Body of pancreas (tissue), 4 donors: ENCODE measurements at regions of chr16 and their contacts with region 1.

Region 1: GRCh38 chr16:66406534-66407221 is 20.4 kb upstream of the BEAN1 start:
- DNase-seq: peak; percentile 82 to 87 (median 84)
- ATAC-seq: peak; percentile 88
- H3K4me3 ChIP-seq: no peak overlapping the region
- H3K27ac ChIP-seq: no peak overlapping the region
- H3K4me1 ChIP-seq: peaks cover 7% of the 10 kb centered on the region
- H3K27me3 ChIP-seq: no peaks in the 10 kb centered on the region
- CTCF ChIP-seq: peak; percentile 72 to 90 (median 87)
- POLR2A ChIP-seq: peak in 1 of 3 donors; percentile 7

Region 2: DNA sequence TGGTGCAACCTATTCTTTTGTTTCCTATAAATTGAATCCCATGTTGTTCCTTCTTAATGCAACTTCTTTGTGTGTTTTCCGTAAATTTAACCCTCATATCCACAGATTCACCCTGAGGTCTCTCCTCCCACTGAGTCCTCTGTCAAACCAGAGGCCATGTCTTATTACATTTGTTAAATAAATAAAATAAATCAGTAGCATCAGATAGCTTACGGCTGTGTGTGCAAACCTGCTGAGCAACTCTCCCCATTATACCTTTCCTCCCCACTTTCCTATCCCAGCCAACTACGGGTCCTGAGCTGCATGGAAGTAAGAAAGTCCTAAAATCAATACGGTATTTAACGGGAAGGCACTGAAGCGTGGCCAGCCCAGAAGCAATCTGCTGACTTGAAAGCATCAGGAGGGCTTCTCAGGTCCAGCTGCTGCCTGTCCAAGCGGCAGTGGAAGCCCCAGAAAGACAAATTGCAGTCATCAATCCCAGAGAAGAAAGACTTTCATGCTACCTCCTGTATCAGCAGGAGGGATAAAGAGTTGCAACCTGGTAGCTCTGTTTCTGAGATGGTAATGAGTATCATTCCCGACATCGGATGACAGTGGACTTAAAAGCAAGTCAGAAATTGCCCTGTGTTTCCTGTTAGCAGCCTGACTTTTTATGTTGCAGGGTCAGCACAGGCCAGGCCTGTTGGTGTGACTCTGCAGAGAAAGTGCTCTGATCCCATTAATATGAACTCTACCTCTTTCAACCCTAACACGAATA is 926.5 kb before region 1 on chr16:
- intact Hi-C with region 1: no loop called
- DNase-seq: no peak
- ATAC-seq: no peak
- H3K4me3 ChIP-seq: no peak overlapping the region
- H3K27ac ChIP-seq: no peak overlapping the region
- H3K4me1 ChIP-seq: no peaks in the 10 kb centered on the region
- H3K27me3 ChIP-seq: no peaks in the 10 kb centered on the region
- CTCF ChIP-seq: no peak
- POLR2A ChIP-seq: no peak

Region 3: DNA sequence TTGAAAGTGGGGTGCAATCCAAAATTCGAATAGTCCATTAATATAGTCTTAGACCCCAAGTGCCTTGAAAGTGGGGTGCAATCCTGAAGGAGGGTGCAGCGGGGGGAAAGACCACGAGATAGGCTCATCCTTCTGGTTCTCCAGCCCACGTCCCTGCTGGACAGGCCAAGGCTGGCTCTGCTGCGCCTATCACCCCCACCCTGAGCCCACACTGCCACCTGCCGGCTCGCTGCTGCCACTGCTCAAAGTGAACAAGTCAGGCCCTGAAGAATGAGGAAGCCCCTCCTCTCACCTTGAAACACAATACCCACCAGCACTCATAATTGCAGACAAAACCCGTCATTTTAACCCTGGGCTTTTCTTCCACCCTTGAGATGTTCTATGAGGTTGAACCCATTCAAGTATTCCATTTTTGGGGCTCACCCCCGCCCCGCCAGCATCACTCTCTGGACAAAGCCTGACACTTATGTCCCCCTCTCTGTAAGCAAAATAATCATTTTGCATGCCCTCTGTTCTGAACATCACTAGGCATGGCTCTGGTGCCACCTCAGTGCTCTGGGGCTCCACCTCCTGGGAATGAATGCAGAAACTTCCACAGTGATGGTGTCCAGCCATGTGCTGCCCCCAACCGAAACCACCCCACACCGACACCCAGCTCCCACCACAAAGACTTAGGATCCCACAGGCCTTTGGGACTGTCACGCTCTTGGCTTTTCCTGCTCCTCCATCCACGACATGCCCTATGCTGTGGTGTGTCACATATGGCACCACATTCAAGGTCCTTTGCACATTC is 77.2 kb after region 1 on chr16:
- intact Hi-C with region 1: loop called (anchors 10 kb)
- DNase-seq: peak; percentile 73 to 77 (median 74)
- ATAC-seq: peak; percentile 78
- H3K4me3 ChIP-seq: no peak overlapping the region
- H3K27ac ChIP-seq: no peak overlapping the region
- H3K4me1 ChIP-seq: peaks cover 11% of the 10 kb centered on the region
- H3K27me3 ChIP-seq: no peaks in the 10 kb centered on the region
- CTCF ChIP-seq: peak; percentile 83 to 94 (median 87)
- POLR2A ChIP-seq: no peak

Region 4: GRCh38 chr16:66608241-66609138 is 201.8 kb after region 1 on chr16:
- intact Hi-C with region 1: loop called (anchors 10 kb)
- DNase-seq: peak; percentile 90 to 95 (median 92)
- ATAC-seq: peak; percentile 81
- H3K4me3 ChIP-seq: no peak overlapping the region
- H3K27ac ChIP-seq: peak overlapping the region in 2 of 4 donors; percentile 9 to 15
- H3K4me1 ChIP-seq: peaks cover 33% of the 10 kb centered on the region
- H3K27me3 ChIP-seq: peaks cover 0 to 4% of the 10 kb centered on the region in 2 donors
- CTCF ChIP-seq: peak; percentile 85 to 95 (median 90)
- POLR2A ChIP-seq: no peak

Region 5: DNA sequence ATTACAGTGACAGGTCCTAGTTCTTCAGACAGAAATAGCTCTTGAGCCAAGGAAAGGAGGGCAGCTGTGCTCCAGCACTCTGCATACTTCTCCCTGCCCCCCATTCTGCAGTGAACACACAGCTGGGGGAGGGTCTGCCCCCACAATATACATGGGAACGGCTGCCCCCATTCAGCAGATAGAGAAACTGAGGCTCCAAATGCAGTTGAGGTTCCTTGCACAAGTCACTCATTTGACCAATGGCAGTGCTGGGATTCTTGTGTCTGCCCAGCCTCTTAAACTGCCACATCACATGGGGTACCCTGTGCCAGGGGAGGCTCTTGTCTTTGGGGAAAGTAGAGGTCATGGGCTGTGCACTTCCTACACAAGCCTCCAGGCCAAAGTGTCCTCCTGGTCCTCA is 462.7 kb after region 1 on chr16:
- intact Hi-C with region 1: loop called (anchors 5 kb)
- DNase-seq: no peak
- ATAC-seq: no peak
- H3K4me3 ChIP-seq: no peak overlapping the region
- H3K27ac ChIP-seq: no peak overlapping the region
- H3K4me1 ChIP-seq: peaks cover 10% of the 10 kb centered on the region
- H3K27me3 ChIP-seq: no peaks in the 10 kb centered on the region
- CTCF ChIP-seq: no peak
- POLR2A ChIP-seq: no peak